ENCODE measurements at regions of chr7 and their contacts with region 1.

Region 1: GRCh38 chr7:13067036-13067435 is 379.6 kb downstream of the ARL4A start:
- DNase-seq: no peak
- H3K4me3 ChIP-seq: no peak overlapping the region
- H3K27ac ChIP-seq: no peak overlapping the region
- H3K4me1 ChIP-seq: no peaks in the 10 kb centered on the region
- H3K27me3 ChIP-seq: no peaks in the 10 kb centered on the region
- CTCF ChIP-seq: no peak

Region 2: GRCh38 chr7:12961910-12962480 is 105.0 kb before region 1 on chr7:
- CTCF ChIA-PET with region 1: no interaction called
- POLR2A ChIA-PET with region 1: interaction called, 17 read pairs
- intact Hi-C with region 1: no loop called
- DNase-seq: no peak
- H3K4me3 ChIP-seq: no peak overlapping the region
- H3K27ac ChIP-seq: no peak overlapping the region
- H3K4me1 ChIP-seq: peaks cover 6% of the 10 kb centered on the region; the same call in 1 of the 2 replicates
- H3K27me3 ChIP-seq: no peaks in the 10 kb centered on the region
- CTCF ChIP-seq: no peak

Region 3: GRCh38 chr7:13042612-13043240 is 24.3 kb before region 1 on chr7:
- CTCF ChIA-PET with region 1: no interaction called
- POLR2A ChIA-PET with region 1: no interaction called
- intact Hi-C with region 1: no loop called
- DNase-seq: peak; percentile 5 to 54
- H3K4me3 ChIP-seq: no peak overlapping the region
- H3K27ac ChIP-seq: no peak overlapping the region; the same call in 1 of the 2 replicates
- H3K4me1 ChIP-seq: peaks cover 10% of the 10 kb centered on the region
- H3K27me3 ChIP-seq: no peaks in the 10 kb centered on the region
- CTCF ChIP-seq: no peak

Region 4: GRCh38 chr7:13144673-13145072 is 77.6 kb after region 1 on chr7:
- CTCF ChIA-PET with region 1: interaction called, 11 read pairs
- POLR2A ChIA-PET with region 1: no interaction called
- intact Hi-C with region 1: no loop called
- DNase-seq: no peak
- H3K4me3 ChIP-seq: no peak overlapping the region
- H3K27ac ChIP-seq: no peak overlapping the region
- H3K4me1 ChIP-seq: no peaks in the 10 kb centered on the region
- H3K27me3 ChIP-seq: no peaks in the 10 kb centered on the region
- CTCF ChIP-seq: no peak

Region 5: GRCh38 chr7:13770305-13770704 is 703.3 kb after region 1 on chr7:
- CTCF ChIA-PET with region 1: no interaction called
- POLR2A ChIA-PET with region 1: no interaction called
- intact Hi-C with region 1: no loop called
- DNase-seq: no peak
- H3K4me3 ChIP-seq: no peak overlapping the region
- H3K27ac ChIP-seq: no peak overlapping the region
- H3K4me1 ChIP-seq: no peaks in the 10 kb centered on the region
- H3K27me3 ChIP-seq: no peaks in the 10 kb centered on the region
- CTCF ChIP-seq: no peak